AG04450 (cell line): ENCODE measurements at regions of chr2 and their contacts with region 1.

Region 1: GRCh38 chr2:113138428-113139322 is 11.3 kb downstream of the IL1RN start:
- DNase-seq: peak; percentile 32
- H3K4me3 ChIP-seq: no peak overlapping the region
- H3K27ac ChIP-seq: no peak overlapping the region
- H3K27me3 ChIP-seq: peaks cover 24% of the 10 kb centered on the region
- CTCF ChIP-seq: peak; percentile 77

Region 2: DNA sequence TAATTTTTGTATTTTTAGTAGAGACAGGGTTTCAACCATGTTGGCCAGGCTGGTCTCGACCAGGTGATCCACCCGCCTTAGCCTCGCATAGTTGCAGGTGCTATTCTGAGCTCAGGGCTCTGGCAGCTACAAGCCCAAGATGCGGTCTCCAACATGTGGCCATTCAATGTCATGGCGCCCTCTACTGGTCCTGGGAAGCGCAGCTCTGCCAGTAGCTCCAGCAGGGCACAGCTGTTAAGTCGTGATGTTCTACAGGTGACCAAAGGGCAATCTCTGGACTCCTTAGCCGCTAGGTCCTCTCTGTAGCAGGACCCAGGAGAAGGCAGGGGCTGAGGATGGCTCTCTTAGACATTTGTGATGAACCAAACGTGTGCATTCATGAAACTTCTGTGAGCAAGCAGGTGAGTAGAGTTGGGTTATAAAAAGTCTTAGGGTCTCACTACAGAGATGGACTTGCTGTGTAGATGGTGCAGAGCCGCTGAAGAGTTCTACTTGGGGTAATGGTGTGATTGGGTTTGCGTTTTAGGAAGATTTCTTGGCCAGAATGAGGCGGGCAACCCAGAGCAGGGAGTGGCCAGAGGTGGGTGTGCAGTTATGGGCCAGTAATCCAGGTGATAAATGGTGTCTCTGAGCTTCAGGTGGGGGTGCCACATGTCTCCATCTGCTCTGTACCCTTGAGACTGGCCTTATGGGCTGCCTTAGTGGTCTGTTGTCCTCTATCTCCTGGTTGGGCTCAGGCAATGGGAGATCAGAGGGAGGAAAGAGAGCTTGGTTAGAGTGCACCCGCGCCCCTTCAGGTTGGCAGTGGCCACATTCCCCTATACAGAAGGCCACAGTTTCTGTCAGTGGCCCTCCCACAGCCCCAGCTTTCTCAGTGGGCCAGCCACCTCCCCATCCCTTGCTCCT is 196.7 kb before region 1 on chr2:
- CTCF ChIA-PET with region 1: no interaction called
- POLR2A ChIA-PET with region 1: no interaction called
- DNase-seq: peak; percentile 50
- H3K4me3 ChIP-seq: no peak overlapping the region
- H3K27ac ChIP-seq: no peak overlapping the region
- H3K27me3 ChIP-seq: peaks cover 10% of the 10 kb centered on the region
- CTCF ChIP-seq: peak; percentile 98

Region 3: DNA sequence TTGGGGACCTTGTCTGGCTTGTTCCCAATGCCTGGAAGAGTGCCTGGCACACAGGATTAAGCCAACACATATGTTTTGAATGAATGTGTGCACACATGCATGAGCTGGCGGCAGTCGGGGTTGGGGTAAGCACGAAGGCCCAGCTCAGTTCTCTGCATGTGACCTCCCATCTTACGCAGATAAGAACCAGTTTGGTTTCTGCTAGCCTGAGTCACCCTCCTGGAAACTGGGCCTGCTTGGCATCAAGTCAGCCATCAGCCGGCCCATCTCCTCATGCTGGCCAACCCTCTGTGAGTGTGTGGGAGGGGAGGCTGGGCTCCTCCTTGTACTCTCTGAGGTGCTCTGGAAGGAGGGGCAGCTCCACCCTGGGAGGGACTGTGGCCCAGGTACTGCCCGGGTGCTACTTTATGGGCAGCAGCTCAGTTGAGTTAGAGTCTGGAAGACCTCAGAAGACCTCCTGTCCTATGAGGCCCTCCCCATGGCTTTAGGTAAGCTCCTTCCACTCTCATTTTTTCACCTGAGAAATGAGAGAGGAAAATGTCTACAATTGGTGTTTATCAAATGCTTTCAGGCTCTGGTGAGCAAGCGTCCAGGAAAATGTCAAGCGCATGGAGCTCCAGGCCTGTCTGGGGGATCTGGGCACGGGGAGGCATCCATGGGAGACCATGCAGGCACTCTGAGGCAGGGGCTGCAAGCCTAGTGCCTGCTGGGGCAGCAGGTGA is 21.0 kb before region 1 on chr2:
- CTCF ChIA-PET with region 1: interaction called, 17 read pairs
- POLR2A ChIA-PET with region 1: no interaction called
- DNase-seq: peak; percentile 7
- H3K4me3 ChIP-seq: no peak overlapping the region
- H3K27ac ChIP-seq: no peak overlapping the region
- H3K27me3 ChIP-seq: peaks cover 8% of the 10 kb centered on the region
- CTCF ChIP-seq: no peak

Region 4: GRCh38 chr2:113157118-113157896 is 18.6 kb after region 1 on chr2:
- CTCF ChIA-PET with region 1: interaction called, 28 read pairs
- POLR2A ChIA-PET with region 1: no interaction called
- DNase-seq: no peak
- H3K4me3 ChIP-seq: peak overlapping the region; percentile 35
- H3K27ac ChIP-seq: no peak overlapping the region
- H3K27me3 ChIP-seq: peaks cover 30% of the 10 kb centered on the region
- CTCF ChIP-seq: no peak

Region 5: DNA sequence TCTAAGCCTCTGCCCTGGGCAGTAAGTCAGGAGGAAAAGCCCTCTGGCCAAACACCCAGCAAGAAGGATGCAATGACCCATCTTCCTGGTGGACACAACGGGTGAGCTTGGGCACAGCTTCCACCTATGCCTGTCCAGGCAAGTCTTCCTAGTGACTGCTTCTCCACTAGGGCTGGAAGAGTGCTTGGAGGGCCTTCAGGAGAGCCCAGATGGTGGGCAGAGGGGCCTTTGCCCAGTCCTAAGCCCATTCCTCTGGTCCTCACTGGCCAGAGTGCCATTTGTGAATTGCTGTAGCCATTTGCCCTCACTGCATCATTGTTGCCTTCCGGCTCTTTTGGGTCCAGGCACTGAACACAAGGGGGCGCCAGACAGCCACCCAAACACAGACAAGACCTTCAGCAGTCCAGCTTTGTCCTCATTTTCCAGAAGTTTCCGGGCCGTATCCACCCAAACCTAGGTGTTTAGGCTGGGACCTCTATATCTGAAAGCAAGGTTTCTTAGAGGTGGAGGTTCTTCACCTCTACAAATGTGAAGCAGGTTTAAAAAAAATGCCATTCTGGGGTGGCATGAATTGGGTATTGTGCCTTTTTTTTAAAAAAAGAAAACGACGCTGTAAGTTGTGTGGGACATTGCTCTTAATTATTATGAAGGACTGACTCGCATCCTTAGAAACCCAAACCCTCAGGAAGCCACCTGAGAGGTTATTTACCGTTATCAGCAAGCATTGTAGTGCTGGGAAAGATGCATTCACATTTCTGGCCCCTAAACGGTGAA is 110.5 kb after region 1 on chr2:
- CTCF ChIA-PET with region 1: interaction called, 27 read pairs
- POLR2A ChIA-PET with region 1: no interaction called
- DNase-seq: peak; percentile 42
- H3K4me3 ChIP-seq: no peak overlapping the region
- H3K27ac ChIP-seq: no peak overlapping the region
- H3K27me3 ChIP-seq: no peaks in the 10 kb centered on the region
- CTCF ChIP-seq: peak; percentile 96

Region 6: DNA sequence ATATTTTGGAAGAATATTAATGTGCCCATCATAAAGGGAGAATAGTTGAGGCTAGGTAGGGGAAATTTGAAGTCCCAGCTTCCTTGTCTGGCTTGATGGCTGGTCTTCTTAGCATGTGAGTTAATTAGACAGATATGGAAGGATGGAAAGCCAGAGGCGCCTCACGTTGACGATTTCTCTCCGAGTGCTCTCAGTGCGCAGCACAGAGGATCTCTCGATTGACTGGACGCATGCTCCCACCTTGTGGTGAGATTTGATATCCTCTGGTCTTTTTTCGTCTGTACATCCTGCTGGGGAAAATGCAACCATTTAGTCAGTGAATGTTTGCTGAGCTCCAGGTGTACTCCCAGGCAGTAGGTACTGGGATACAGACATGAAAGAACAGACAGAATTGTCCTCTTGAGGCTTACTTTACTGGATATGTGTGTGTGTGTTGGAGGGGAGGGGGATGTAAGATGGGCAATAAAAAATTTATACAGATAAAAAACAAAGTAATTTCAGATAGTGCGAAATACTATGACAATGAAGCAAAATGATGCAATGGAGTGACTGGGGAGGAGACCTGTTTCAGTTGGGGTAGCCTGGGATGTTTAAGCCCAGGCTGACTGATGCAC is 231.9 kb after region 1 on chr2:
- CTCF ChIA-PET with region 1: interaction called, 65 read pairs
- POLR2A ChIA-PET with region 1: no interaction called
- DNase-seq: peak; percentile 43
- H3K4me3 ChIP-seq: no peak overlapping the region
- H3K27ac ChIP-seq: no peak overlapping the region
- H3K27me3 ChIP-seq: peaks cover 5% of the 10 kb centered on the region
- CTCF ChIP-seq: peak; percentile 75

Region 7: DNA sequence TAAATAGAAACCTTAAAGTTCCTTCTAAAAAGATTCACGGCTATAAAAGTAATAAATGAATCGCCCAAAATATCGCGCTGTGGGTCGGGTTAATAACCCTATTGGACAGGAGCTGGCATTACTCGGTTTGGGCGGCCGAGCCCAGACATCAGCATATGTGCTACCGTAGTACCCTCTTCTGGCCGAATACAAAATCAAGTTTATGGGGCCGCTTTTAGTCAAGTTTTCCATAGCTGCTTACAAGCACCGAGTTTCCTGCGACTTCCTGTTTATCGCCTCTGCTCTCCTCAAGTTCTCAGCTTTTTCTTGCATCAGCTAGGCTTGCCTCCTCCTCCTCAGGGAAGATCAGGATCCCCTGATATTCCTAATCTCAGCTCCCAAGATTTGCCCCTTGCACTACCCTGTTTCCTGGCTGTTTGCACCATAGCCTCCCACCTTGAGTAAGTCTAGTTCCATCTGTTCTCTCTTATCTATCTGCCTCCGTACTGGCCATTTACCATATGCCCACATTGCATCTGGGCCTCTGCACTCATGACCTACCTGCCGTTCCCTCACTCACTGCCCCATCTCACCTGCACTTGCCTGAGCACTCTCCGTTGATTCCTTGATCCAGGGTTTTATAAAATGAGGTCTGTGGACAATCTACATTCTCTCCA is 561.6 kb after region 1 on chr2:
- CTCF ChIA-PET with region 1: no interaction called
- POLR2A ChIA-PET with region 1: no interaction called
- DNase-seq: no peak
- H3K4me3 ChIP-seq: no peak overlapping the region
- H3K27ac ChIP-seq: no peak overlapping the region
- H3K27me3 ChIP-seq: no peaks in the 10 kb centered on the region
- CTCF ChIP-seq: no peak